ENCODE measurements at regions of chr2 and their contacts with region 1.

Region 1: DNA sequence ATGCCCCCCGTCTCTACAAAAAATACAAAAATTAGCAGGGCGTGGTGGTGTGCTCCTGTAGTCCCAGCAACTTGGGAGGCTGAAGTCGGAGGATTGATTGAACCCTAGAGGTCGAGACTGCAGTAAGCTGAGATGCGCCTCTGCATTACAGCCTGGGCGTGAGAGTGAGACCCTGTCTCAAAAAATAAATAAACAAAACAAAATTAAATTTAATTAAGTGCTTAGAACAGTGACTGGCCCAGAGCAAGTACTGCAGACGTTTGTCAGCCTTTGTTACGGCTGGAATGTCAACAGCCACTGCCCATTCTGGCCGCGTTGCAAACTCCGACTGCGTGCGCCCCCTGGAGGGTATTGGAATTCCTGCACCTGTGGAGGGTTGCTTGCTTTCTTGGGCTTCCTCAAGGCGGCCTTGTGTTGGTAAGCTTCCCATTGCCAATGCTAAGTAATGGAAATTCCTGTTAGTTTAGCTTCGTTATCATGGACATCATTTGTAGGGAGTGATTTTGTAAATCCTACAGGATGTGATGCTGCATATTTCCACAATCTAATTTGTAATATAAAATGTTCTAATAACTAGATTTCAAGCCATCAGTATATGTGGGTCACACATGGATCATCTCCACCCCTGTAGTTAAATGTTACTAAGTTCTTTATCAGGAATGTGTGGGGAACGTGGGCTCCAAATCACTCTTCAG is 15.9 kb upstream of the ATP6V1B1 start:
- DNase-seq: peak; percentile 44
- H3K4me3 ChIP-seq: no peak overlapping the region
- H3K27ac ChIP-seq: no peak overlapping the region
- H3K27me3 ChIP-seq: no peaks in the 10 kb centered on the region
- CTCF ChIP-seq: peak; percentile 91

Region 2: GRCh38 chr2:70580352-70580751 is 339.5 kb before region 1 on chr2:
- CTCF ChIA-PET with region 1: no interaction called
- POLR2A ChIA-PET with region 1: no interaction called
- DNase-seq: no peak
- H3K4me3 ChIP-seq: no peak overlapping the region
- H3K27ac ChIP-seq: no peak overlapping the region
- H3K27me3 ChIP-seq: no peaks in the 10 kb centered on the region
- CTCF ChIP-seq: no peak

Region 3: GRCh38 chr2:70861777-70862625 is 57.8 kb before region 1 on chr2:
- CTCF ChIA-PET with region 1: interaction called, 16 read pairs
- POLR2A ChIA-PET with region 1: no interaction called
- DNase-seq: peak; percentile 51
- H3K4me3 ChIP-seq: no peak overlapping the region
- H3K27ac ChIP-seq: no peak overlapping the region
- H3K27me3 ChIP-seq: peaks cover 37% of the 10 kb centered on the region
- CTCF ChIP-seq: peak; percentile 100

Region 4: GRCh38 chr2:70907130-70908057 is 12.4 kb before region 1 on chr2:
- CTCF ChIA-PET with region 1: interaction called, 15 read pairs
- POLR2A ChIA-PET with region 1: no interaction called
- DNase-seq: no peak
- H3K4me3 ChIP-seq: peak overlapping the region; percentile 51
- H3K27ac ChIP-seq: no peak overlapping the region
- H3K27me3 ChIP-seq: no peaks in the 10 kb centered on the region
- CTCF ChIP-seq: no peak

Region 5: DNA sequence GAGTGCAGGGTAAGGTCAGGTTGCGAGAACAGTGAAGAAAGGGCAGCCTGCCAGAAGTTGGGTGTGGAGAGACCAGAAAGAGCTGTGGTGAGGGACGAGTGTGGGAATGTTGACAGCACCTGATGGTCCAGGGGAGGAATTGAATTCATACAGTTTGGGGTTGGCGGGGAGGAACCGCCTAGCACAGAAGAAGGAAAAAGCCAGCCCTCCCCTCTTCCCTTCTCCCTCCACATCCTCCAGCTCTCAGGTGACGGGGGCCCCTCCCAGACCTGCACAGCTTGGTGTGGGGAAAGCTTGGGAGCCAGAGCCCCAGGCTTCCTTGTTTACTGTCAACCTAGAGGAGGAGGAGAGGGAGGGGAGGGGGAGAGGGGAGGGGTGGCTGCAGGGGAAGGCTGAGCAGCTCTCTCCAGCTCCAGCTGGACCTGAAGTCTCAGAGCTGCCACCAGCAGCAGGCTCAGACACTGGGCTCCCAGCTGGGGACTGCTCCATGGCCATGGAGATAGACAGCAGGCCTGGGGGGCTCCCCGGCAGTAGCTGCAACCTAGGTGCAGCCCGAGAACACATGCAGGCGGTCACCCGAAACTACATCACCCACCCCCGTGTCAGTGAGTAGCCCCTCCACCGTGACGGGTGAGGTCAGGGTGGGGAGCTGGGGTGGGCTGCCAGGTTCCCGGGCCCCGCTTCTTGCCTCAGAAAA is 15.8 kb after region 1 on chr2 and contains the start of gene ATP6V1B1:
- CTCF ChIA-PET with region 1: interaction called, 20 read pairs
- POLR2A ChIA-PET with region 1: no interaction called
- DNase-seq: no peak
- H3K4me3 ChIP-seq: no peak within 1 kb of the TSS
- H3K27ac ChIP-seq: no peak within 1 kb of the TSS
- H3K27me3 ChIP-seq: no peaks in the 10 kb centered on the region
- CTCF ChIP-seq: no peak
- polyA plus RNA-seq, gene ATP6V1B1: 0.57 and 0.82 TPM in 2 replicates